ENCODE measurements at regions of chr2 and their contacts with region 1.

Region 1: DNA sequence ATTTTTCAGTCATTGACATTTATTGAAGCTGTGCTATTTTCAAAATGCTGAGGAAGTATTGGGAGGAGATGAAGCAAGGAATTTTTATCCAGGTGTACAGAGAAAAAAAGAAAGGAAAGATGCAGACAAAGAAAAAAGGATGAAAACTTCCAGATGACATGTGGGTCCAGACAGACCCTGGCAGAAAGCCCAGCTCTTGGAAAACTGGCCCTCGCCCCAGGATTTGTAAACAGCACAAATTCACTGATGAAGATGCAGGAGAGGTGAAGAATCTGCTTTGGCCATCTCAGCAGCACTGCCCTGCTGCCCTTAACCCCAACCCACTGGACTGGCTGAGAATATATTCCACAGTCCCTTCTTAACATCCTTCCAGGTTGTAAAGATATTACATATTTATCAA is 12.5 kb downstream of the TACR1 start:
- DNase-seq: no peak
- CTCF ChIP-seq: no peak

Region 2: GRCh38 chr2:75021657-75022056 is 165.2 kb before region 1 on chr2:
- CTCF ChIA-PET with region 1: no interaction called
- POLR2A ChIA-PET with region 1: no interaction called
- DNase-seq: no peak
- CTCF ChIP-seq: no peak

Region 3: GRCh38 chr2:75199428-75200011 is 12.7 kb after region 1 on chr2 and contains the start of gene TACR1:
- CTCF ChIA-PET with region 1: interaction called, 22 read pairs
- POLR2A ChIA-PET with region 1: no interaction called
- DNase-seq: peak; percentile 64
- CTCF ChIP-seq: peak; percentile 76